Aorta (tissue), 5 donors: ENCODE measurements at regions of chr1 and their contacts with region 1.

Region 1: GRCh38 chr1:30888391-30888790 is 20.2 kb downstream of the SDC3 start:
- DNase-seq: peak; percentile 86 to 91
- ATAC-seq: peak; percentile 88
- H3K4me3 ChIP-seq: no peak overlapping the region
- H3K27ac ChIP-seq: peak overlapping the region in 1 of 2 donors; percentile 95
- H3K4me1 ChIP-seq: peaks cover 0 to 2% of the 10 kb centered on the region in 2 donors
- H3K27me3 ChIP-seq: no peaks in the 10 kb centered on the region

Region 2: GRCh38 chr1:30823969-30824735 is 64.2 kb before region 1 on chr1:
- intact Hi-C with region 1: loop called in 1 of 2 experiments (anchors 1 kb)
- DNase-seq: peak; percentile 97
- ATAC-seq: peak; percentile 97
- H3K4me3 ChIP-seq: no peak overlapping the region
- H3K27ac ChIP-seq: peak overlapping the region; percentile 62 to 99
- H3K4me1 ChIP-seq: peaks cover 0 to 3% of the 10 kb centered on the region in 2 donors
- H3K27me3 ChIP-seq: no peaks in the 10 kb centered on the region